ENCODE measurements at regions of chr1 and their contacts with region 1.

Region 1: DNA sequence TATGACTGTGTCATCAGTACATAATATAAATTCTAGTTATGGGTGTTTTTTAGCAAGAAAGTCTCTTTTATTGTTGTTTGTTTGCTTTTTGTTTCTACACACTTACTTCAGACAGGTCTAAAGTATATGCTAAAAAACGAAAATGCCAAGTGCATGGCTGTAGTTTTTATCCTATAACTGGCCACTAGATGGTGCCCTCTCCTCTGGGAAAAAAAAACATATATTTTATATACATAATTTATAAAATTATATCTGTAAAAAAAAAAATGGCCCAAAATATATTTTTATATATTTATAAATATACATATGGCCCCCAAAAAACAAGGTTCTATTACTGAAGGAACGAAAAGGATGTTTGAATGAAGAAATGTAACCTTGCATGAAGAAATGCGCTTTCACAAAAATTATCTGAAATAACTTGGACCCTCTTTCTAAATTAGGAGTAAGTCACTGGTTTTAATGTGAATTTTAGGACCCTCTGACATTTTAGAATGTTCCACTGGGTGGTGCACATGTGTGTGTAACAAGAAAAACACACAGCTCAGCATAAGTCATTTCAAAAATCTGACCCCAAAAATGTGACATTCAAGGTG is 93.5 kb downstream of the TTLL7 start:
- H3K4me3 Mint-ChIP-seq: no peak overlapping the region
- H3K27ac Mint-ChIP-seq: no peak overlapping the region
- H3K4me1 Mint-ChIP-seq: no peaks in the 10 kb centered on the region
- H3K27me3 Mint-ChIP-seq: no peaks in the 10 kb centered on the region

Region 2: GRCh38 chr1:83954166-83954823 is 48.9 kb after region 1 on chr1:
- intact Hi-C with region 1: no loop called
- H3K4me3 Mint-ChIP-seq: no peak overlapping the region
- H3K27ac Mint-ChIP-seq: no peak overlapping the region
- H3K4me1 Mint-ChIP-seq: no peaks in the 10 kb centered on the region
- H3K27me3 Mint-ChIP-seq: no peaks in the 10 kb centered on the region

Region 3: DNA sequence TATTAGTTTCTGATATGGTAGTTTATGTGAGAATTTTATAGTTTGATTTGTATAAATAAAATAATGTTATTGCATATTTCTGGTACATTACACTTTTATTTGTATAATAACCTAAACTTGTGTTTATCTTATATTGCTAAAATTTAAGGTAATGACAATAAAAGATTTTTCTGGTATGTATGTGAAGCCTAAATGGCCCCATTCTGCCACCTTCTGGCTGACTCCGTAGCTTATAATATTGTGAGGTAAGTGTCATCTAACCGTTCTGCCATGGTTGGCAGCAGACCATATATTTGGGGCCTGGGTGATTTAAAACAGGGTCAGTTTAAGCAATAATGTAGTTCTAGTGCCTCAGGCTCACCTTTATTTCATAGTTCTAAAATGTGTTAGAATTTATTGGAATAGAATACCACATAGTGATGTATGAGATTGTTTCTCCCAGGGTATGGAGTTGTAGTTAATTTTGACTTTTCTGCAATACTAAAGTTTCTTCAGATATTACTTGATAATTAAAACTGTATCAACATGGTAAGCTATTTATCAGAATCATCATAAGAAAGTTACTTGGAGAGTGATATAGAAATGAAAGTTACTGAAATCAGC is 217.5 kb after region 1 on chr1:
- intact Hi-C with region 1: loop called (anchors 5 kb)
- H3K4me3 Mint-ChIP-seq: no peak overlapping the region
- H3K27ac Mint-ChIP-seq: no peak overlapping the region
- H3K4me1 Mint-ChIP-seq: no peaks in the 10 kb centered on the region
- H3K27me3 Mint-ChIP-seq: no peaks in the 10 kb centered on the region

Region 4: GRCh38 chr1:84772428-84772943 is 867.1 kb after region 1 on chr1:
- intact Hi-C with region 1: loop called (anchors 5 kb)
- H3K4me3 Mint-ChIP-seq: no peak overlapping the region
- H3K27ac Mint-ChIP-seq: no peak overlapping the region
- H3K4me1 Mint-ChIP-seq: no peaks in the 10 kb centered on the region
- H3K27me3 Mint-ChIP-seq: peaks cover 1% of the 10 kb centered on the region

Region 5: DNA sequence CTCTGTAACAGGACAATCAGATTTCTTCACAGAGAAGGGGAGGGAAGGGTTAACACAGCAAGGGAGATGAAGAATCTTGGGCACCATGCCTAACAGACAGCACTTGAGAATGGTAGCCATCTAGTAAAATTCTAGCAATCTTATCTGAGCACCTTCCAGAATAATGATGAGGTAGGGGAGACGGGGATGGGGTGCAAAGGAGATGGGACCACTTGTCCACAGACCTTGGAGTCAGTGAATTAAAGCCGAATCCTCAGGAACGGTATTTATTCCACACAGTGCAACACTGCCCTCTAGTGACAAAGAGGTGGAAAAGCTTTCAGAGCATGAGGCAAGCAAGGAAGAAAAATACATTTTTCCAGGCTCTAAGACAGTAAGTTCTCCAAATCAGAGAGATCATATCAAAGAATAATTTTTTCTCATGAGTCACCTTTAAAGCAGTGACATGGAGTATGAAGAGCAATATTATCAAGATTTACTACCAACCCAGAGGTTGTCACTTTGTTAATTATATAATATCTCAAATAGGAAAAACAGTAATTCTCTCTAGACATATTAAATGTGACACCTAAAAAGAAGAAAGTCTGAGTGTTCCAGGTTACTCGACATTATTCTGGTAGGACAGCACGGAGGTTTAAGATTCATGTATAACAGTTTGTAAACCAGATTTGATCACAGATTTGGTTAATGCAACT is 1030.9 kb after region 1 on chr1:
- intact Hi-C with region 1: loop called (anchors 5 kb)
- H3K4me3 Mint-ChIP-seq: no peak overlapping the region
- H3K27ac Mint-ChIP-seq: no peak overlapping the region
- H3K4me1 Mint-ChIP-seq: no peaks in the 10 kb centered on the region
- H3K27me3 Mint-ChIP-seq: no peaks in the 10 kb centered on the region

Measured in dendritic cell treated with granulocyte-macrophage colony-stimulating factor and Interleukin-4, amounts not matched to agents 40 ng/mL and 50 ng/mL, for 4 days (primary cell).